ENCODE measurements at regions of chr3 and their contacts with region 1.

Region 1: DNA sequence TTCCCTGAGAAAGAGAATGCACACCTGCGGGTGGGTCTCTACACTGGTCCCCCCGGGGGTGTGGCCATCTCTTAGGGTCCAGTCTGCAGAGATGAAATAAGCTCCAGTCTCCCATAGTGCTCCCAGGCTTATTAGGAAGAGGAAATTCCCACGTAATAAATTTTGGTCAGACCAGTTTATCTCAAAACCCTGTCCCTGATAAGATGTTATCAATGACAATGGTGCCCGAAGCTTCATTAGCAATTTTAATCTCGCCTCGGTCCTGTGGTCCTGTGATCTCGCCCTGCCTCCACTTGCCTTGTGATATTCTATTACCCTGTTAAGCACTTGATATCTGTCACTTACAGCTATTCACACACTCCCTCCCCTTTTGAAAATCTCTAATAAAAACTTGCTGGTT is 46.8 kb downstream of the OR5H15 start:
- DNase-seq: no peak
- ATAC-seq: no peak
- H3K4me3 ChIP-seq: no peak overlapping the region
- H3K27ac ChIP-seq: no peak overlapping the region
- H3K4me1 ChIP-seq: no peaks in the 10 kb centered on the region
- H3K27me3 ChIP-seq: no peaks in the 10 kb centered on the region
- CTCF ChIP-seq: no peak

Region 2: GRCh38 chr3:98068824-98069223 is 144.5 kb before region 1 on chr3:
- intact Hi-C with region 1: no loop called
- DNase-seq: no peak
- ATAC-seq: no peak
- H3K4me3 ChIP-seq: no peak overlapping the region
- H3K27ac ChIP-seq: no peak overlapping the region
- H3K4me1 ChIP-seq: no peaks in the 10 kb centered on the region
- H3K27me3 ChIP-seq: peaks cover 0 to 7% (median 0%) of the 10 kb centered on the region in 7 donors
- CTCF ChIP-seq: no peak

Region 3: GRCh38 chr3:98154686-98155085 is 58.6 kb before region 1 on chr3:
- intact Hi-C with region 1: loop called in 3 of 10 experiments (anchors 2 kb)
- DNase-seq: no peak
- ATAC-seq: no peak
- H3K4me3 ChIP-seq: no peak overlapping the region
- H3K27ac ChIP-seq: no peak overlapping the region
- H3K4me1 ChIP-seq: no peaks in the 10 kb centered on the region
- H3K27me3 ChIP-seq: no peaks in the 10 kb centered on the region
- CTCF ChIP-seq: no peak